Left cardiac atrium (tissue), 4 donors: ENCODE measurements at regions of chr12 and their contacts with region 1.

Region 1: DNA sequence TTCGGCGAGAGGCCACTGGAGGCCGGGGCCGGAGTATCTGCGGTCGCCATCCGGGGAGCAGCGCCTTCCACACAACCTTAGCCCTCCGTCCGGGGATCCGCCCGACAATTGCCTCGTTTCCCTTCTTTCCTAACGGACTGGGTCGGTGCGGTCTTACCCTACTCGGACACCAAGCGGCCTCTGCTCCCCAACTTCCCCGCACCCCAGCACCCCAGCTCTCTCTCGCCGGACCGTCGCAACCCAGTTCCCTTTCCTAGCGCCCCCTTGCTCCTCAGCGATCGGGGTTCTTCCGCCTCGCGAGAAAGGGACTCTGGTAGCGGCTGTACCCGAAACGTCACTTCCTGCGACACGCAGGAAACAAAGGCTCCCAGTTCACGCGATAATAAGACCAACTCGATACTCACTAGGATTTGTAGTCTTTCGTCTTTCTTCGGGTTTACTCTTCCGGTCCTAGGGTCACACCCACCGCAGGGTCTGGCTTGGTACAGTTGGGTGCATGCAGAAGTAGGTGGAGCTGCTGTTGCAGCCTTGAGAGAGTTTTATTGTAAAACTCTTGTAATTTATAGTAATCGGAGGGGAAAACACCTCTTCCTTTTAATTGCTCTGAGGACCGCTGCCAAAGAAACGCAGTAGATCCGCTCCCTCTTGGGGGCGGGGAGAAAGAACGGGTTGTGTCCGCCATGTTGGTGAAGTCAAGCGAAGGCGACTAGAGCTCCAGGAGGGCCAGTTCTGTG is at the start of gene ZFC3H1:
- DNase-seq: peak; percentile 93
- ATAC-seq: peak; percentile 94 to 96
- total RNA-seq, gene ZFC3H1: 19.4 to 24.5 TPM

Region 2: GRCh38 chr12:71045781-71046180 is 617.9 kb before region 1 on chr12:
- intact Hi-C with region 1: no loop called
- DNase-seq: no peak
- ATAC-seq: peak; percentile 55 to 58

Region 3: DNA sequence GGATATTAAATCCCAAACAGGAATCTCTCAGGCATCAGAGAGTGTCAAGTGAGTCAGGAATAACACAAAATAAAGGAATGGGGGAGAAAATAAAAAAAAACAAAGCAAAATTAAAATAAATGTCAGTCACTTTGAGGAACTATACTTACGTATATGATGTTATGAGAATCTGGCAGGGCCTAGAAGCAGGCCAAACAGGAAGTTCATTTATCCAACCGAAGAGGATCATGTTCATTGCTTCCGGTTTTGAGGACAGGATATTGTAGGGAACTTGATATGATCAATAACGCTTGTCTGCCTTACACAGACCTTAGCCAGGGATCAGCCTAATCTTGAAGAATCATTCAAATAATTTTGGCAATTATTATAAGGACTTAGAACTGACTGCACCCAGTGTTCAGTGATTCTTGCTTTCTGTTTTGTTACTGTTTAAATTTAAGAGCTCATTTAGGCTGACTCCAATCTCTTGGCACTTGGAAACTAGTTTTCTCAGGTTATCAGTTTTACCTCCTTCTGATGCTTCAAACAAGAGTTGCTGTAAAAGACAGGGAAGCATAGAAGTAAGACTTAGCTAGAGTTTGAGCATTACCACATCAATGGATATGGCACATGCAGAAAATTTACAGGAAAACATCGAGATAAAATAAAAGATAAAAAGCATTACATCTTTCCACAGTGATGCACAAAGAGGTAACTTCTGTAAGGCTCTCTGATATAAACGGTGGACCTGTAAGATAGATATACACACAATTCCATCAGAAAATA is 53.5 kb before region 1 on chr12:
- intact Hi-C with region 1: no loop called
- DNase-seq: no peak
- ATAC-seq: no peak

Region 4: GRCh38 chr12:71685914-71686665 is 22.4 kb after region 1 on chr12 and contains the start of gene TMEM19:
- intact Hi-C with region 1: loop called in 1 of 2 experiments (anchors 1 kb)
- DNase-seq: peak; percentile 94
- ATAC-seq: peak; percentile 99
- total RNA-seq, gene TMEM19: 25.8 to 28.8 TPM

Region 5: DNA sequence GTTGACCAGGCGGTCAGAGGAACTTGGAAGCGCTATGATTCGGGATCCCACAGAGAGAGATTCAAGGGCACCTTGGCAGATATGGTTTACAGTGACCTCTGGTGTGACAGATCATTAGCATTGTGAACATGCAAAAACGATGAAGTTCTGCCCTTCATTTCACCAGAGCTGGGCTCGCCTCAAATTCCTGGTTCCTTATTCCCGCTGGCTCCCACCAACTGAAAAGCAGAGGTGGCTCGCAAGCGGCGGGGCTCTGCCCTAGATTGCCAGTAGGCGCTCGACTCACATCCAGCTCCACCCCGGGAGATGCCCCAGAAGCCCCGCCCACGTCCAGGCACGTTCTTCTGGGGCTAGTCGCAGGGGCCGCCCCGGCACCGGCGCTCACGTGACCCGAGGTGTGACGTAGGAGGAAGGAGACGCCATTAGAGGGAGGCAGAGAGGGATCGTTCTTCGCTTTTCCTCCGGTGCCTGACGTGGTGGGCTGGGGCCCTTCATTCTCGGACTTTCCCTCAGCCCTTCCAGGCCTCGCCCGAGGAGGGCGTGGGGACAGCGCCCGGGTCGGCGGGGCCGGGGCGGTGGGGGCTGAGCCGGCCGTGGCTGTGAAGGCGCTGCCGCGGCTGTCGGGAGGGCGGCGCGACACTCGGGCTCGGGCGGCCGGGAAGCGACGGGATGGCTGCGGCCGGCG is 90.9 kb after region 1 on chr12 and contains the start of gene RAB21:
- intact Hi-C with region 1: loop called in 1 of 2 experiments (anchors 10 kb)
- DNase-seq: peak; percentile 99
- ATAC-seq: peak; percentile 98 to 99
- total RNA-seq, gene RAB21: 95.7 to 117 TPM